Caco-2 (cell line): ENCODE measurements at regions of chr5 and their contacts with region 1.

Region 1: GRCh38 chr5:143824851-143825720 is 13.1 kb downstream of the HMHB1 start:
- DNase-seq: peak; percentile 79 to 89
- H3K4me3 ChIP-seq: no peak overlapping the region
- H3K4me3 Mint-ChIP-seq: no peak overlapping the region
- H3K27ac Mint-ChIP-seq: no peak overlapping the region
- H3K4me1 ChIP-seq: peaks cover 8% of the 10 kb centered on the region; the same call in 1 of the 2 replicates
- H3K4me1 Mint-ChIP-seq: no peaks in the 10 kb centered on the region
- H3K27me3 ChIP-seq: no peaks in the 10 kb centered on the region
- H3K27me3 Mint-ChIP-seq: no peaks in the 10 kb centered on the region
- CTCF ChIP-seq: peak; percentile 83 to 91

Region 2: GRCh38 chr5:143002459-143003328 is 822.4 kb before region 1 on chr5:
- CTCF ChIA-PET with region 1: no interaction called
- POLR2A ChIA-PET with region 1: no interaction called
- intact Hi-C with region 1: loop called (anchors 1 kb)
- DNase-seq: no peak
- H3K4me3 ChIP-seq: no peak overlapping the region
- H3K4me3 Mint-ChIP-seq: no peak overlapping the region
- H3K27ac Mint-ChIP-seq: no peak overlapping the region
- H3K4me1 ChIP-seq: no peaks in the 10 kb centered on the region
- H3K4me1 Mint-ChIP-seq: peaks cover 7% of the 10 kb centered on the region
- H3K27me3 ChIP-seq: no peaks in the 10 kb centered on the region
- H3K27me3 Mint-ChIP-seq: no peaks in the 10 kb centered on the region
- CTCF ChIP-seq: peak; percentile 32 to 37

Region 3: DNA sequence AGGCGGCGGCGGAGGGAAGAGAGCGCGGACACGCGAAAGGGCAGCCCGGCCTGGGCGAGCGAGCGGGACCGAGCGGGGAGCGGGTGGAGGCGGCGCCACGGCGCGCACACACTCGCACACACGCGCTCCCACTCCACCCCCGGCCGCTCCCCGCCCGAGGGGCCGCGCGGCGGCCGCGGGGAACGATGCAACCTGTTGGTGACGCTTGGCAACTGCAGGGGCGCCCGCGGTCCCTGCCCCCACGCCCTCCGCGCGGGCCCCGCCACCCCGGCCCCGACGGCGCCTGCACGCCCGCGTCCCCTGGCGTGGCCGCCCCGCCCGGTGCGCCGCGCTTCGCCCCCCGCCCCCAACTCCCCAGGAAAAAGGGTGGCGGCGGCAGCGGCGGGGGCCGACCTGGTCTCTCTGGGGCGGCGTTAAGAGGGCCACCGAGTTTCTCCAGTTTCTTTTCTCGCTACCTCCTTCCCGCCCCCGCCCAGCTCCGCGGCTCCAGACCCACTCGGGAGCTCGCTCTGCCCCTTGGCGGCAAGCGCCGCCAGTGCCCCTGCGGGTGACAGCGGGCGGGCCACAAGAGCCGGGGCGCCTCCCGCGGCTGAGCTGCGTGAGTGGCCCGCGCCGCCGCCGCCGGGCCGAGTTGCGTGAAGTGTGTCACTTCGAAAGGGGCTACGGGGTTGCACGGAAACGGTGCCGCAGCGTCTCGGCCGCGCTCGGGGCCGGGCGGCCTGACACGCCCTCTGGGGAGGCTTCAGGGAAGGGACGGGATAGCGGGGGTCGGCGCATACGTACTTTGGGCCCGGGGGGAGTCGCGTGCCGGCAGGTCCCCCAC is 421.3 kb before region 1 on chr5 and contains the start of gene NR3C1:
- CTCF ChIA-PET with region 1: no interaction called
- POLR2A ChIA-PET with region 1: no interaction called
- intact Hi-C with region 1: loop called (anchors 1 kb)
- DNase-seq: peak; percentile 57 to 78
- H3K4me3 ChIP-seq: peak within 1 kb of the TSS; percentile 90
- H3K4me3 Mint-ChIP-seq: peak within 1 kb of the TSS; percentile 77
- H3K27ac Mint-ChIP-seq: peak within 1 kb of the TSS; percentile 15
- H3K4me1 ChIP-seq: no peaks in the 10 kb centered on the region
- H3K4me1 Mint-ChIP-seq: peaks cover 13% of the 10 kb centered on the region
- H3K27me3 ChIP-seq: no peaks in the 10 kb centered on the region; the same call in 1 of the 2 replicates
- H3K27me3 Mint-ChIP-seq: no peaks in the 10 kb centered on the region
- CTCF ChIP-seq: peak; percentile 36 to 57
- total RNA-seq, gene NR3C1: 15.4 and 17.5 TPM in 2 replicates

Region 4: DNA sequence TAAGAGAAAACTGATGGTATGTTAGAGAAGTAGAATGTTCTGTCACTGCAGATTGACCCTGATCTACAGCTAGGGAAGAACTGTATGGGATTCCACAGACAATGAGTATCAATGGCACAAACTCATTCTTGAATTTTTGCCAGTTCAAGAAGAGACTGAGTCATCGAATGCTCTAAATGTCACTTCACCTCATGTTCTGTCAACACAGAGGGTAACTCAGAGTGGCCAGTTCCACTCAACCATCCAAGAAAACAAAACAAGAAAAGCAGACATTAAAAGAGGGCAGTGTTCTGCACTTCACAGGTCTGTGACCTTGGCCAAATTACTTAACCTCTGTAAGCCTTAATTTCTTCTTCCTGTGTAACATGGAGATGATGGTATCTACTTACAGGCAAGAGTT is 145.3 kb before region 1 on chr5:
- CTCF ChIA-PET with region 1: no interaction called
- POLR2A ChIA-PET with region 1: no interaction called
- intact Hi-C with region 1: loop called (anchors 10 kb)
- DNase-seq: no peak
- H3K4me3 ChIP-seq: no peak overlapping the region
- H3K4me3 Mint-ChIP-seq: no peak overlapping the region
- H3K27ac Mint-ChIP-seq: peak overlapping the region; percentile 17
- H3K4me1 ChIP-seq: peaks cover 46% of the 10 kb centered on the region
- H3K4me1 Mint-ChIP-seq: peaks cover 34% of the 10 kb centered on the region
- H3K27me3 ChIP-seq: no peaks in the 10 kb centered on the region
- H3K27me3 Mint-ChIP-seq: no peaks in the 10 kb centered on the region
- CTCF ChIP-seq: no peak

Region 5: DNA sequence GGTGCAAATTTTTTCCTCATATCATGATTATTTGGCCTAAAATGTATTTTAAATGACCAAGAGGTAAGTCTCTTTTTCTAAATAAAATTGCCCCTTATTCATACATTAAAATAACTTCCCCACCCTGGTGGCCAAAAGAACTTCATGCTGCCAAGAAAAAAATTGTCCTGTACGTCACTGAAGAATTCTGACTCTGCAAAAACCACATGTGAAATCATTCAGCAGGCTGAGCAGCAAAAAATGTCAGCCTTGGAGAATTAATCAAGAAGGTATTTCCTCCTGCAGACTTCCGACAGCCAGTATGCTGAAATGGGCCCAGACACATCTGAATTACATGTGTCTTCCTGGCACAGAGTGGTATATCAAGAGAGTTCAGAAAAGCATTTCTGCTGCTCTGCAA is 107.7 kb before region 1 on chr5:
- CTCF ChIA-PET with region 1: no interaction called
- POLR2A ChIA-PET with region 1: no interaction called
- intact Hi-C with region 1: no loop called
- DNase-seq: no peak
- H3K4me3 ChIP-seq: no peak overlapping the region
- H3K4me3 Mint-ChIP-seq: no peak overlapping the region
- H3K27ac Mint-ChIP-seq: no peak overlapping the region
- H3K4me1 ChIP-seq: no peaks in the 10 kb centered on the region
- H3K4me1 Mint-ChIP-seq: no peaks in the 10 kb centered on the region
- H3K27me3 ChIP-seq: no peaks in the 10 kb centered on the region
- H3K27me3 Mint-ChIP-seq: no peaks in the 10 kb centered on the region
- CTCF ChIP-seq: no peak

Region 6: GRCh38 chr5:143968011-143968878 is 143.2 kb after region 1 on chr5:
- CTCF ChIA-PET with region 1: interaction called, 4 read pairs
- POLR2A ChIA-PET with region 1: no interaction called
- intact Hi-C with region 1: loop called (anchors 2 kb)
- DNase-seq: peak in 1 of 2 experiments; percentile 46
- H3K4me3 ChIP-seq: no peak overlapping the region
- H3K4me3 Mint-ChIP-seq: no peak overlapping the region
- H3K27ac Mint-ChIP-seq: no peak overlapping the region
- H3K4me1 ChIP-seq: no peaks in the 10 kb centered on the region
- H3K4me1 Mint-ChIP-seq: no peaks in the 10 kb centered on the region
- H3K27me3 ChIP-seq: no peaks in the 10 kb centered on the region; the same call in 1 of the 2 replicates
- H3K27me3 Mint-ChIP-seq: peaks cover 17% of the 10 kb centered on the region
- CTCF ChIP-seq: peak; percentile 10 to 43